Posterior cingulate gyrus (tissue), 11 donors: ENCODE measurements at regions of chr19 and their contacts with region 1.

Region 1: GRCh38 chr19:19404879-19405860 is at the start of gene GATAD2A:
- DNase-seq: peak; percentile 87 to 99 (median 94)

Region 2: DNA sequence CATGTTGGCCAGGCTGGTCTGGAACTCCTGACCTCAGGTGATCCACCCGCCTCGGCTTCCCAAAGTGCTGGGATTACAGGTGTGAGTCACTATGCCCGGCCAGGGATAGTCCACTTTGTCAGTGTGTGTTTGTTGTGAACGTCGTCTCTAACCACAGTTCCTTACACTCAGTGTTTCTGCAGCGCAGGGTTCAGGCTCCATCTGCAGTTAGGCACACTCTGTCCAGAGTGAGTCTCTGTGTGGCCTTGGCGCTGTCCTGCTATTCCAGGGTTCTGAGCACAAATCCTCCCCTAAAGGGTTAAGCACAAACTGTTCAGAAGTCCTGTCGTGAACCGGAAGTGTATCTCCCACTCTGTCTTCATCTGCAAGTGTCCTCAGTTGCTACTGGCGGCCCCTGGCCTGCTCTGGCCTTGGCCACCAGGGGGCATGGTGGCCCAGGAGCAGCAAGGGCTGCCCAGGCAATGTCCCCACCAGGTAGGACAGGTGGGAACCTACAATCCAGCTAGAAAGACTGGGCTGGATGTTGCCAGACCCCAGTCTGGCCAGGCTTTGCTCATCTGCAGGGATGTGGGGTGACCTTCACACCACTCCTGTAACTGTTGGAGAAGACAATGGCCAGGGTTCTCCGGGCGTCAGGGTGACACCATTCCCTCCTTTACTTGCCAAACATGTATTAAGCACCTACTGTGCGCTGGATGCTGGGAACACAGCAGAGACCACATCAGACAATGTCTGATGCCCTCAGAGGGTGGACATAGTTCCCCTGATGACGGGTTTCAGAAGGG is 38.4 kb before region 1 on chr19:
- intact Hi-C with region 1: loop called (anchors 5 kb)
- DNase-seq: peak in 6 of 10 donors; percentile 34 to 92 (median 50)

Region 3: GRCh38 chr19:19385108-19385899 is 19.9 kb before region 1 on chr19:
- intact Hi-C with region 1: loop called (anchors 2 kb)
- DNase-seq: peak; percentile 99 to 100 (median 100)

Region 4: GRCh38 chr19:19531951-19532805 is 127.0 kb after region 1 on chr19:
- intact Hi-C with region 1: no loop called
- DNase-seq: peak; percentile 77 to 98 (median 90)